CD8-positive, alpha-beta memory T cell (primary cell): ENCODE measurements at regions of chr3 and their contacts with region 1.

Region 1: DNA sequence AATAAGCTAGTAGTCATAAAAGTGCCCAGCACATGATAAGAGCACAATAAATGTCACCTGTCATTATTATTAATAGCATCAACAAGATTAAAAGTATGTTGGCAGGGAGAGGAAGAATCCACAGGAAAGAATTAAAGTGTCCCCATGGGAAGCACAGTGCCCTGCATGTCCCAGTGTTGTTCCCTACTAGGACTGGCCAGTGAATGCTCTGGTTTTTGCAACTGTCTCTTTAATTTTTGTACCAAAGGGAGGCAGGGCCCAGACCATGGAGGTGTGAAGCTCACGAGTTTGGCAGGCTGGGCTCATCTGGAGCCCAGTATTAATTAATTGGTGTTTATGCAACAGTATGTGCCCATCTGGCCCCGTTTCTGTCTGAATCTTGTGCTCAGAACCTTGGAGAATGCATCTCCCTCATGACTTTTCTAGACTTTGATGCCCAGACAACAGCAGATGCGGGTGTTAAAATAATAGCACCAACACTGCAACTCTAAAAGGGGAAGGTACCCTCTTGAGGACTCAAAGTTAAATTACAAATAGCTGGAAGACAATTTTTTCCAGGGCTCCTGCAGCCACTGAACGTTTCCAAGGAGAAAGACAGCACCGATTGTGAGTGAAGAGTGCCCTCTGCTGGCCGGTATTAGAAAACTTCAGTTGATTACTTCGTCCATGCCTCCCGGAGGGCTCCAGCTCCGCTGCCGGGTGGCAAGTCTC is 71.9 kb upstream of the SPATA12 start:
- DNase-seq: peak; percentile 58 to 75 (median 63)
- H3K4me3 ChIP-seq: no peak overlapping the region
- H3K4me3 Mint-ChIP-seq: peak overlapping the region in 1 of 7 donors; percentile 40
- H3K27ac ChIP-seq: no peak overlapping the region
- H3K27ac Mint-ChIP-seq: peak overlapping the region in 2 of 8 donors; percentile 4
- H3K4me1 ChIP-seq: peaks cover 8% of the 10 kb centered on the region
- H3K4me1 Mint-ChIP-seq: peaks cover 9 to 24% (median 19%) of the 10 kb centered on the region in 3 donors
- H3K27me3 ChIP-seq: no peaks in the 10 kb centered on the region
- H3K27me3 Mint-ChIP-seq: peaks cover 8 to 22% of the 10 kb centered on the region in 2 donors

Region 2: GRCh38 chr3:56673781-56674457 is 314.7 kb before region 1 on chr3:
- CTCF ChIA-PET with region 1: interaction called, 4 read pairs
- POLR2A ChIA-PET with region 1: interaction called, 12 read pairs
- DNase-seq: no peak
- H3K4me3 ChIP-seq: no peak overlapping the region
- H3K4me3 Mint-ChIP-seq: no peak overlapping the region
- H3K27ac ChIP-seq: no peak overlapping the region
- H3K27ac Mint-ChIP-seq: no peak overlapping the region
- H3K4me1 ChIP-seq: peaks cover 18% of the 10 kb centered on the region
- H3K4me1 Mint-ChIP-seq: peaks cover 45 to 67% (median 60%) of the 10 kb centered on the region in 3 donors
- H3K27me3 ChIP-seq: no peaks in the 10 kb centered on the region
- H3K27me3 Mint-ChIP-seq: no peaks in the 10 kb centered on the region

Region 3: GRCh38 chr3:56702490-56703315 is 285.9 kb before region 1 on chr3:
- CTCF ChIA-PET with region 1: interaction called, 134 read pairs
- POLR2A ChIA-PET with region 1: interaction called, 3 read pairs
- DNase-seq: peak in 4 of 5 donors; percentile 34 to 68 (median 62)
- H3K4me3 ChIP-seq: no peak overlapping the region
- H3K4me3 Mint-ChIP-seq: no peak overlapping the region
- H3K27ac ChIP-seq: no peak overlapping the region
- H3K27ac Mint-ChIP-seq: peak overlapping the region in 1 of 8 donors; percentile 7
- H3K4me1 ChIP-seq: peaks cover 15% of the 10 kb centered on the region
- H3K4me1 Mint-ChIP-seq: peaks cover 23% of the 10 kb centered on the region in 3 donors
- H3K27me3 ChIP-seq: no peaks in the 10 kb centered on the region
- H3K27me3 Mint-ChIP-seq: peaks cover 0 to 3% of the 10 kb centered on the region in 2 donors

Region 4: GRCh38 chr3:56753206-56753820 is 235.3 kb before region 1 on chr3:
- CTCF ChIA-PET with region 1: interaction called, 10 read pairs
- POLR2A ChIA-PET with region 1: no interaction called
- DNase-seq: peak in 1 of 5 donors; percentile 52
- H3K4me3 ChIP-seq: no peak overlapping the region
- H3K4me3 Mint-ChIP-seq: peak overlapping the region; percentile 72 to 95 (median 91)
- H3K27ac ChIP-seq: no peak overlapping the region
- H3K27ac Mint-ChIP-seq: peak overlapping the region; percentile 87 to 99 (median 96)
- H3K4me1 ChIP-seq: peaks cover 61% of the 10 kb centered on the region
- H3K4me1 Mint-ChIP-seq: peaks cover 75 to 81% (median 79%) of the 10 kb centered on the region in 3 donors
- H3K27me3 ChIP-seq: no peaks in the 10 kb centered on the region
- H3K27me3 Mint-ChIP-seq: no peaks in the 10 kb centered on the region

Region 5: GRCh38 chr3:56974247-56974930 is 14.2 kb before region 1 on chr3:
- CTCF ChIA-PET with region 1: interaction called, 14 read pairs
- POLR2A ChIA-PET with region 1: no interaction called
- DNase-seq: no peak
- H3K4me3 ChIP-seq: no peak overlapping the region
- H3K4me3 Mint-ChIP-seq: no peak overlapping the region
- H3K27ac ChIP-seq: no peak overlapping the region
- H3K27ac Mint-ChIP-seq: no peak overlapping the region
- H3K4me1 ChIP-seq: no peaks in the 10 kb centered on the region
- H3K4me1 Mint-ChIP-seq: no peaks in the 10 kb centered on the region
- H3K27me3 ChIP-seq: no peaks in the 10 kb centered on the region
- H3K27me3 Mint-ChIP-seq: no peaks in the 10 kb centered on the region

Region 6: GRCh38 chr3:57017459-57017845 is 28.8 kb after region 1 on chr3:
- CTCF ChIA-PET with region 1: no interaction called
- POLR2A ChIA-PET with region 1: no interaction called
- DNase-seq: no peak
- H3K4me3 ChIP-seq: no peak overlapping the region
- H3K4me3 Mint-ChIP-seq: no peak overlapping the region
- H3K27ac ChIP-seq: no peak overlapping the region
- H3K27ac Mint-ChIP-seq: no peak overlapping the region
- H3K4me1 ChIP-seq: no peaks in the 10 kb centered on the region
- H3K4me1 Mint-ChIP-seq: no peaks in the 10 kb centered on the region
- H3K27me3 ChIP-seq: no peaks in the 10 kb centered on the region
- H3K27me3 Mint-ChIP-seq: peaks cover 9 to 23% of the 10 kb centered on the region in 2 donors

Region 7: DNA sequence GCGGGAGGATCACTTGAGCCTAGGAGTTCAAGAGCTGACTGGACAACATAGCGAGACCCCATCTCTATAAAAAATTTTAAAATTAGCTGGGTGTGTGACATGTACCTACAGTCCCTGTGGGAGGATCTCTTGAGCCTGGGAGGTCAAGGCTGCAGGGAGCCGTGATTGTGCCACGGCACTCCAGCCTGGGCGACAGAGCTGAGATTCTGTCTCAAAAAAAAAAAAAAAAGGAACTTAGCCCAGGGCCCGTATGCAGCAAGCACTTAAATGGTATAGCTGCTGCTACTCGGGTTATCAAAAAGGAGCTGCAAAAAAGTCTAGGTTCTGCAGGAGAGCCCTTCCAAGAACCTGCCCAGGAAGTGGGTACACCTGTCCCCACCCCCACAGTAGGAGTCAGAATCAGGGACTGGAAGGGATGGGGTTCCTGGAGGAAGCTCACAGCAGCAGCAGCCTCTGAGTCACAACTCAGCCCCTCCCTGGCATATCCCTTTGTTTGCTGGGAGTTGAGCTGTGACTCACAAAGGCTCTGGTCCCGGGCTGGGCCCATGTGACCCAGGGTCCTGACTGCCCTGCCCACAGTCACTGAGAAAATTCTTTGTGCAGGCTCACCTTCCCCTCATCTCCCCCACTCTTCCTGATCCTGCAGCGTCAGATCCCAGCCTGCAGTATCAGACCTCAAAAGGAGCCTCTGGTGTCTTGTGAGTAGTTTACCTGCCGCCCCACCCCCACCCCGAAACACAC is 71.6 kb after region 1 on chr3 and contains the start of gene SPATA12:
- CTCF ChIA-PET with region 1: no interaction called
- POLR2A ChIA-PET with region 1: no interaction called
- DNase-seq: no peak
- H3K4me3 ChIP-seq: no peak within 1 kb of the TSS
- H3K4me3 Mint-ChIP-seq: no peak within 1 kb of the TSS
- H3K27ac ChIP-seq: no peak within 1 kb of the TSS
- H3K27ac Mint-ChIP-seq: no peak within 1 kb of the TSS
- H3K4me1 ChIP-seq: no peaks in the 10 kb centered on the region
- H3K4me1 Mint-ChIP-seq: no peaks in the 10 kb centered on the region
- H3K27me3 ChIP-seq: no peaks in the 10 kb centered on the region
- H3K27me3 Mint-ChIP-seq: peaks cover 12 to 25% of the 10 kb centered on the region in 2 donors
- total RNA-seq, gene SPATA12: not detected